ENCODE measurements at regions of chr15 and their contacts with region 1.

Region 1: DNA sequence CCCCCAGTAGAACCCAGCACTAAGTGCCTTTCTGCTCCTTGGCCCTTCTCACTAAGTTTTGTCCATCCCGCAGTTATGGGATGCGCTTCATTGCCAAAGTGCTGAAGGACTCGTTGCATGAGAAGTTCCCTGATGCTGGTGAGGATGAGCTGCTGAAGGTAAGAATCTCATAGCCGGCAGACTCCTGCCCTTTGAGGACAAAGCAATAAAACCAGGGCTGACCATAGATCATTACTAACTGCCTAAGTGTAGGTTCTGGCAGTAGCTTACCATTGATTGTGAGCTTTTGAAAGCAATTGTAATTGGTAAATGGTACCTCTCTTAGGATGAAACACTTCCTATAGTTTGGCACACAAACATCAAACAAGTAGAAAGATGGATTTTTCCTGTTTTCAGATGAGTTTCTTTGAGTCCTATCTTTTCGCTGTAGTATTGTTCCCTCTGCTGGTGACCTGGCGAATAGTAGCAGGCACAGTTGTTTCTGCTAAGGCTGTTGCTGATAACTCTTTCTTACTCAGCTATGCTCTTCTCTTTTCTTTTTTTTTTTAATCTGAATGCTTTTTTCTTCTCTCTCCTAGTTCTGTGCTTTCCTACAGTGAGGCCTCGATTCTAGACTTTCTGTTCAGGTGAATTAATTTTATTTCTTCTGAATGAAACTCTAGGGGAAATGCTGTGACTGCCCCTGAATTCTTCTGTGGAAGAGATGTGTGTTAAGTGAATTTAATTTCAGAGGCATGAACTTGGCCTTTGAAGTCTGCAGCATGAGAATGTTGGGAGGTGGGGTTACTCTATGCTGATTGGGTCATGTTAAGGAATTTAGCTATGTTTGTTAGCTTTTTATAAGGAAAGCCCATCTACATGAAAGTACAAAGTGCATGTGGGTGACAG is 47.4 kb upstream of the CRTC3 start:
- DNase-seq: peak; percentile 35 to 64
- ATAC-seq: peak; percentile 83 to 87; a peak in 5 of 6 replicates
- H3K4me3 ChIP-seq: no peak overlapping the region
- H3K27ac ChIP-seq: no peak overlapping the region
- H3K4me1 ChIP-seq: no peaks in the 10 kb centered on the region
- CTCF ChIP-seq: peak; percentile 98
- EP300 ChIP-seq: no peak
- POLR2A ChIP-seq: no peak
- RAD21 ChIP-seq: peak; percentile 98

Region 2: GRCh38 chr15:90300988-90301706 is 181.2 kb before region 1 on chr15:
- CTCF ChIA-PET with region 1: interaction called, 35 read pairs
- POLR2A ChIA-PET with region 1: no interaction called
- DNase-seq: peak; percentile 62 to 84
- ATAC-seq: peak; percentile 84 to 97
- H3K4me3 ChIP-seq: no peak overlapping the region
- H3K27ac ChIP-seq: peak overlapping the region; percentile 23 to 71; a peak in 4 of 6 replicates
- H3K4me1 ChIP-seq: no peaks in the 10 kb centered on the region
- CTCF ChIP-seq: peak; percentile 81
- EP300 ChIP-seq: no peak
- POLR2A ChIP-seq: no peak
- RAD21 ChIP-seq: peak; percentile 44 to 64; a peak in 4 of 5 replicates

Region 3: DNA sequence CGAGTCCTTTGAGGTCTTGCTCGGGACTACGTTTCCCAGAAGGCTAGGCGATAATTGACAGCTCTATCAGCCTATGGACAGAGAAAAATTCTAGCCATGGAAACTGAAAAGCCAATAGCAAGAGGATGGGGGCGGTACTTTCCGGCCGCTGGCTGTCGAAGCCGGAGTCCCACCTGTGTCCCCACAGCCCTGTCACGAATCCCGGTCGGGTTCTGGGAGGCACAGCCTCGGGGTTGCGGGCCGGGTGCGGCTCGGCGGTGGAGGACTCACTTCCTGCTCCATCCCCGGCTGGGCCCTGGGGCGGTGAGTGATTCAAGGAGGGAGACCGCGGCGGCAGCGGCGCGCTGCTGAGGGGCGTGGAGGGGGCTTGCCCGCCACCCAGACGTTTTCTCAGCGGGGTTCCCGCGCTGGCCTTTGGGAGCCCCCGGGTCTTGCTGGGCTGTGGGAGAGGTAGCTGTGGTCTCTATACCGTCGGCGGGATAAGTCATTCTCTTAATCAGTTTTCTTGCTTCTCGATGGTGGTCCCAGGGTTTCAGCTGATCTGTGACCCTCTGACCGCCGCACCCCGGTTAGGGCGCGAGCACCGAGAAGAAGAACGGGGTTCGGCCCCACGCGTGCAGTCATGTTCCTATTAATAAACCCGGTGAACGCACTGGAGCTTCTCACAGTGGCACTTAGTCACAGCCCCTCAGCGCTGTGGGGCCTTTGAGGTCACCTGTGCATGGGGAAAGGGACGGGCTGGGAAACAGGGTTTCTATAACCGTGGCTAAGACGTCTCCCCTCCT is 130.1 kb before region 1 on chr15 and contains the start of gene ZNF774:
- CTCF ChIA-PET with region 1: interaction called, 35 read pairs
- POLR2A ChIA-PET with region 1: no interaction called
- DNase-seq: peak; percentile 96 to 100
- ATAC-seq: peak; percentile 98 to 99
- H3K4me3 ChIP-seq: peak within 1 kb of the TSS; percentile 72
- H3K27ac ChIP-seq: peak within 1 kb of the TSS; percentile 72 to 85
- H3K4me1 ChIP-seq: no peaks in the 10 kb centered on the region
- CTCF ChIP-seq: no peak
- EP300 ChIP-seq: no peak
- POLR2A ChIP-seq: peak; percentile 51
- RAD21 ChIP-seq: no peak
- polyA plus RNA-seq, gene ZNF774: 1.2 and 1.4 TPM in 2 replicates

Region 4: GRCh38 chr15:90394748-90395442 is 87.5 kb before region 1 on chr15:
- CTCF ChIA-PET with region 1: interaction called, 14 read pairs
- POLR2A ChIA-PET with region 1: no interaction called
- DNase-seq: no peak
- ATAC-seq: peak in 1 of 2 experiments; percentile 42; a peak in 3 of 6 replicates
- H3K4me3 ChIP-seq: no peak overlapping the region
- H3K27ac ChIP-seq: no peak overlapping the region
- H3K4me1 ChIP-seq: peaks cover 20% of the 10 kb centered on the region
- CTCF ChIP-seq: no peak
- EP300 ChIP-seq: no peak
- POLR2A ChIP-seq: no peak
- RAD21 ChIP-seq: no peak

Region 5: GRCh38 chr15:90451053-90451850 is 31.1 kb before region 1 on chr15:
- CTCF ChIA-PET with region 1: interaction called, 23 read pairs
- POLR2A ChIA-PET with region 1: no interaction called
- DNase-seq: peak in 1 of 2 experiments; percentile 9
- ATAC-seq: 0 out of 6 replicates have a peak, but pooled peaks of 1 of the 2 experiments have one; percentile 18
- H3K4me3 ChIP-seq: no peak overlapping the region
- H3K27ac ChIP-seq: no peak overlapping the region
- H3K4me1 ChIP-seq: no peaks in the 10 kb centered on the region
- CTCF ChIP-seq: no peak
- EP300 ChIP-seq: no peak
- POLR2A ChIP-seq: no peak
- RAD21 ChIP-seq: no peak

Region 6: DNA sequence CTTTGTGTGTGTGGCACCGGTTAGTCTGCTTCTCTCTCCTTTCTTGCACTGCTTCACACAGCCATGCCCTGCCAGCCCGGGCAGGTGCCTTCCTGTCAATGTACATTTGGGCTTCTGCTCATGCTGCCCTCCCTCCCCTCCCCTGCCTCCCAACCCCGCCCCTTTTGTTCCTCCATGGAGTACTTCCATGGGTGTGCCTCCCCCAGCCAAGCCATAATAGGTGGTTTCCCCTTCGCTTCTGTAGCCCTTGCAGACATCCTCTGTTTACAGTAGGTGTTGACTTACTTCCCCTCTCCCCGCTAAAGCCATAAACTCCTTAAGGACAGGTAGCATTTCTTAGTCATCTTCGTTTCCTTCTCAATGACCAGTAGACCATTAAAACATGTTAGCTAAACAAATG is 15.5 kb after region 1 on chr15:
- CTCF ChIA-PET with region 1: interaction called, 54 read pairs
- POLR2A ChIA-PET with region 1: no interaction called
- DNase-seq: no peak
- ATAC-seq: no peak; a peak in 1 of 6 replicates
- H3K4me3 ChIP-seq: no peak overlapping the region
- H3K27ac ChIP-seq: no peak overlapping the region
- H3K4me1 ChIP-seq: no peaks in the 10 kb centered on the region
- CTCF ChIP-seq: no peak
- EP300 ChIP-seq: no peak
- POLR2A ChIP-seq: no peak
- RAD21 ChIP-seq: no peak

Region 7: DNA sequence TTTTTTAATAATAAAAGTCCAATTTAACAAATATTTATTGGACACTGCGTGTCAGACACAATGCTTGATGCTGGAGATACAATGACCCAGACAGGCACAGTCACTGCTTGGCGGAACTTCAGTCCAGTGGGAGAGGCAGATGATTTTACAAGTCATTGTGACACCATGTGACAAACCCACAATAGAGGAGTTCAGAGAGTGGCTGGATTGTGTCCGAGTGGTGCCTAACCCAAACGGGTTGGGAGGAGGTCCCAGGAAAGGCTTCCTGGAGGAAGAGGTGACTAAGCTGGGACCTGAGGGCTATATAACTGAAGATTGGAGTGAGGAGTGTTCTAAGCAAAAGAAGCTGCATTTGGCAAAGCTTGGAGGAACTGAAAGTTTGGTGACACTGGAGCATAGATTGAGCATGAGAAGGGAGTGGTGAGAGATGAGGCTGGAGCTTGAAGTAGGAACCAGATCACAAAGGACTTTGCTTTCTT is 88.7 kb after region 1 on chr15:
- CTCF ChIA-PET with region 1: no interaction called
- POLR2A ChIA-PET with region 1: no interaction called
- DNase-seq: peak in 1 of 2 experiments; percentile 52
- ATAC-seq: peak; percentile 43 to 74
- H3K4me3 ChIP-seq: no peak overlapping the region
- H3K27ac ChIP-seq: 0 out of 6 replicates have a peak overlapping the region, but pooled peaks of 1 of the 2 experiments have one; percentile 4
- H3K4me1 ChIP-seq: peaks cover 10% of the 10 kb centered on the region; the same call in 2 of the 3 replicates
- CTCF ChIP-seq: no peak
- EP300 ChIP-seq: no peak
- POLR2A ChIP-seq: no peak
- RAD21 ChIP-seq: no peak

Region 8: DNA sequence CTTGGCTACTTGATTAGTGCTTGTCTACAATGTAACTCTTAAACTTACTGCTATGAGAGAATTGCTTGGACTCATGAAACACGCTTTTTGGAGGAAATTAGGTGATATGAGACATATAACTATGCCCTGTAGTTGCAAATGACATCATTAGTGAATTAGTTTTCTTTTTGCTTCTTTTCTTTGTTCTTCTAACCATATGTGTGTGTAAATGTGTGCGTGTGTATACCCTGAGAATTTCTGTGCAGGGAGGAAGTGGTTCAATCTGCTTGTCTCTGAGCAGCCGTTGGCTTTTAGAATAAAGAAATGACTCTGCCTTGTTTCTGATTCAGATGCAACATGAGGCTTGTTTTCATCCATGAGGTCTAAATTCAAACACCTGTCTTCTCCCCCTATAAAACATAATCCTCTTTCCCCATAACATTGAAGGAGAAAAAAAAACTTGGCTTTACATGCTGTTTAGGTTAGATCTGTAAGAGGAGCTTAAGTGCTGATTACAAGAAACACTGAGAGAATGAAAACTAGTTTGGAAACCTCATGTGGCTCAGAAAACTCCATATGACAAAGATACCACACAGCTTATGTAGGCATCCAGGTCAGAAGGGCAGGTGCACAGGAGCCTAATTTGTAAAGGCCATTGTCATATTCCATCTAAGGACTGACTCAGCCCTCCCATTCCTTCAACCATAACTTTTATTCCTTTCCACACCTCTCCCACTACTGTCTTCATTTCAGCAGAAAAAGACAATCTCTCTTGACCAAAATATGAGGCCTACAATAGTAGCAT is 204.3 kb after region 1 on chr15:
- CTCF ChIA-PET with region 1: no interaction called
- POLR2A ChIA-PET with region 1: no interaction called
- DNase-seq: no peak
- ATAC-seq: no peak
- H3K4me3 ChIP-seq: no peak overlapping the region
- H3K27ac ChIP-seq: no peak overlapping the region
- H3K4me1 ChIP-seq: no peaks in the 10 kb centered on the region
- CTCF ChIP-seq: no peak
- EP300 ChIP-seq: no peak
- POLR2A ChIP-seq: no peak
- RAD21 ChIP-seq: no peak